Activated CD4-positive, alpha-beta memory T cell treated with anti-CD3 and anti-CD28 coated beads for 36 hours (primary cell): ENCODE measurements at regions of chr12 and their contacts with region 1.

Region 1: GRCh38 chr12:59431266-59431665 is 164.6 kb upstream of the SLC16A7 start:
- DNase-seq: no peak
- H3K4me3 Mint-ChIP-seq: no peak overlapping the region
- H3K27ac Mint-ChIP-seq: no peak overlapping the region
- H3K4me1 Mint-ChIP-seq: no peaks in the 10 kb centered on the region
- H3K27me3 Mint-ChIP-seq: no peaks in the 10 kb centered on the region

Region 2: GRCh38 chr12:59452259-59452658 is 21.0 kb after region 1 on chr12:
- CTCF ChIA-PET with region 1: no interaction called
- POLR2A ChIA-PET with region 1: no interaction called
- intact Hi-C with region 1: no loop called
- DNase-seq: no peak
- H3K4me3 Mint-ChIP-seq: no peak overlapping the region
- H3K27ac Mint-ChIP-seq: no peak overlapping the region
- H3K4me1 Mint-ChIP-seq: no peaks in the 10 kb centered on the region
- H3K27me3 Mint-ChIP-seq: no peaks in the 10 kb centered on the region

Region 3: GRCh38 chr12:59834659-59835474 is 403.6 kb after region 1 on chr12:
- CTCF ChIA-PET with region 1: interaction called, 5 read pairs
- POLR2A ChIA-PET with region 1: no interaction called
- intact Hi-C with region 1: loop called (anchors 10 kb)
- DNase-seq: no peak
- H3K4me3 Mint-ChIP-seq: no peak overlapping the region
- H3K27ac Mint-ChIP-seq: no peak overlapping the region
- H3K4me1 Mint-ChIP-seq: no peaks in the 10 kb centered on the region
- H3K27me3 Mint-ChIP-seq: peaks cover 2% of the 10 kb centered on the region